Colonic mucosa (tissue), 4 donors: ENCODE measurements at regions of chr10 and their contacts with region 1.

Region 1: DNA sequence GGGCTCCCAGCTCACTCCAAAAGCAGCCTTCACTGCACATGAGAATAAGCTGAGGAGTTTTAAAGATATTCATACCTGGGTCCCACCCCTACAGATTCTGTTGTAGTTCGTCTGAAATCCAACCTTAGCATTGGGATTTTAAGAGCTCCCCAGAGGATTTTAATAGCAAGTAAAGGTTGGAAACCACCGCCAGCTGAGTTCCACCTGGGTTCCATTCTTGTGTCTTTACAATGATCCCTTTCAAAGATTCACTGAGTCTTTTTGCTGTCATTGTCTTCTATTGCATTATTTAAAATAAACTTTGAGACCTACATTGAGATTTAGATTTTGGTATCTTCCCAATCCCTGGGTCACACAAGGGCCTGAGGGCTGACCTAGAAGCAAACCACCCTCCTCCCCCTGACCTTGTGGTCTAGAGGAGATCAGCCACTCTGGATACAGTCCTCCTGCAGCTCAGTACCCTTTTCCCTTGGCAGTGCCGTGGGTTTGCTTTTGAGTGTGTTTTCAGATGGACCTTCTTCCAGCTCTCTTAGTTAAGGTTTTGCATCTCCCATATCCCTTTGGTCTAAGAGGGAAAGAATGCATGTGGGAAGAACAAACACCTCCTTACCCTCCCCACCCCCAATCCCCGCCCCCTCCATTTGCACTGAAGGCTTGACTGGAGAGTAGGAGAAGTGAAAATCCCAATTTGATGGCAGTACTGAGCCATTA is 22.6 kb upstream of the SIRT1 start:
- DNase-seq: no peak
- H3K4me3 ChIP-seq: no peak overlapping the region
- H3K27ac ChIP-seq: no peak overlapping the region
- H3K4me1 ChIP-seq: no peaks in the 10 kb centered on the region
- H3K27me3 ChIP-seq: no peaks in the 10 kb centered on the region
- CTCF ChIP-seq: no peak

Region 2: GRCh38 chr10:68156373-68157185 is 294.7 kb after region 1 on chr10:
- intact Hi-C with region 1: loop called (anchors 2 kb)
- DNase-seq: peak; percentile 71
- H3K4me3 ChIP-seq: no peak overlapping the region
- H3K27ac ChIP-seq: no peak overlapping the region
- H3K4me1 ChIP-seq: no peaks in the 10 kb centered on the region
- H3K27me3 ChIP-seq: no peaks in the 10 kb centered on the region
- CTCF ChIP-seq: peak; percentile 82

Region 3: DNA sequence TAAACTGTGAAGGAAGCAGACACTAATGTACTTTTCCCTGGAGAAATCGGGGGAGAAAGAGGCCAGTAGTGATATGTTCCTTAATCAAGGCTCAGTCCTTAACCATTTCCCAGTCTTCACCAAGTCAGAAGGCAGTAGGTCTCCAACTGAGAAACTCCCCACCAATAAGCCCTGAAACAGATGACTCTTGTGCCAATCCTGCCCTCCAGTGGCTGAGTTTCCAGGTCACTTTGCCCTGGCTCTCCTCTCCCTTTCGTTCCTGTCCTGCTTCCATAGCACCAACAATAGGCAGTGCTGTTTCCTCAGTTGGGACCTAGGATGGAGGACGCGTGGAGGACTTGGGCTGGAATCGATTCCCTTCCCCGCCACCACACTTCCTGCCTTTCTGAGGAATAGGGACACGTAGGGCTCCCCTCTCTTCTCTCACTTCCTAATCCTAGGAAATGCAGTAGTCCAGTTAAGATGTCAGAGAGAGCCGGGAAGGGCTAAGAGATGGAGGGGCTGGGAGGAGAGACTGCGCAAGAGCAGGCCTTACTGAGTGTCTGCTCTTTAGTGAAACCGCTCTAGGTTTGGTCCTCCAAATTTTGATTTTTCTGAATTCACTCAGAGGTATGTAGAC is 346.6 kb after region 1 on chr10:
- intact Hi-C with region 1: loop called (anchors 5 kb)
- DNase-seq: peak; percentile 66
- H3K4me3 ChIP-seq: no peak overlapping the region
- H3K27ac ChIP-seq: no peak overlapping the region
- H3K4me1 ChIP-seq: no peaks in the 10 kb centered on the region
- H3K27me3 ChIP-seq: no peaks in the 10 kb centered on the region
- CTCF ChIP-seq: peak; percentile 45

Region 4: GRCh38 chr10:68242051-68242450 is 380.1 kb after region 1 on chr10:
- intact Hi-C with region 1: no loop called
- DNase-seq: no peak
- H3K4me3 ChIP-seq: no peak overlapping the region
- H3K27ac ChIP-seq: no peak overlapping the region
- H3K4me1 ChIP-seq: no peaks in the 10 kb centered on the region
- H3K27me3 ChIP-seq: no peaks in the 10 kb centered on the region
- CTCF ChIP-seq: no peak